Prostate gland (tissue), 2 donors: ENCODE measurements at regions of chr14 and their contacts with region 1.

Region 1: DNA sequence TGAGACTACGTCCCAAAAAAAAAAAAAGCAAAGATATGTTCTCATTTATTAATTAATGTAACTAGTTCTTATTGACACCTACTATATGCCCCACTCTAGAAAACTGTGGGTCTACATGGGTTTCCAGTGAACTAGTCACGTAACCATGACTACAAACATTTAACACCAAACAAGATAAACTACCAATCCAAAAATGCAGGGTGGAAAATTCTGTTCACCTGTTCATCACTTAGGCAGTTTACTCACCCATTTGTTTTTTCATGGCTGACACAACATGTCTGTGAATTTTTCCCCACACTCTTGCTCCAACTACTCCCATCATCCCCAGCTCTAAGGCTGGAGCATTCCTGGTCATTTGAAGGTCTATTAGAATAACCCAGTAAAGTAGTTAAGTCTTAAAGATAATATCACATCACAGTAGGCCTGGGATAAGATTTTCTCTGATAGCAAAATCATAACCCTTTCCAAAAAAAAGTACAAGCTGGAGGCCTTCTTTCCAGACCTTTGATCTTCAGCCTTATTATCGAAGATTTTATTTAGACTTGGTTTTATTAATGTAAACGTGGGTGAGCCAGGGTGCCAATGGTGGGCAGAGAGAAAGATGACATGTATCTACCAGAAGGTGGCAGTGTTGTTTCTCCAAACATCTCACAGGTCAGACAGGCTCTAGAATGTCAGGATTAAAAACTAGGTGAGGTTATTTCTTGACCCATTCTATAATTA is 61.6 kb upstream of the DAAM1 start:
- DNase-seq: peak; percentile 33
- H3K4me3 ChIP-seq: no peak overlapping the region
- H3K27ac ChIP-seq: no peak overlapping the region
- H3K4me1 ChIP-seq: no peaks in the 10 kb centered on the region
- H3K27me3 ChIP-seq: no peaks in the 10 kb centered on the region
- CTCF ChIP-seq: peak; percentile 37 to 87 (median 82)
- POLR2A ChIP-seq: no peak

Region 2: DNA sequence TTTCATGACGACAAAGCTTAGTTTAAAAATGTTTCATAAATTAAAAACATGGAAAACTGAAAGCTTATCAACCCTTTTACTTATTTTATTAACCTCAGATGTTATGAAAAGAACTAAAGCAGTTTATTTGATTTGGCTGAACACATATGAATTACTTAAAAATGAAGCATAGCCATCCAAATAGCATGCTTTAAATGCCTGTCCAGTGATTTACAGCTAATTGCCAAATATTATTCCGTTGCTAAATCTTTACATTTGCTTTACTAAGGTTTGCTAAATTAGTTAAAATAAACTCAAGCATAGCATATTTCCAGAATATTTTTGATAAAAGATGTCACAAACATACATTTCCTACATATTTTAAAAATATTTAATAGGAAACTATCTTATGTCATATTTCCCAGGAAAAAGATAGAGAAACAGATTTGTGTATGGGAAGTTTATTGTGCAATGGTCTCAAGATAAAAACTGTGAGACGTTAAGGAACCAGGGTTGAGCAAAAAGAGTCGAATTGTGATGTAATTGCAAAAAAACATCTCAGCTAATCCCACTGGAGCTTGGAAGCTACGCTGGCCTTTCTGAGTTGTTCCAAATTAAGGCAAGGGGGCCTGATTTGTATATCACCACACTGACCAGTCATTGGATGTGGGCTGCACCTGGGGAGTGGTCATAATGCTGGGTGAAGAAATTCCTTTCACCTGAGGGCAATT is 312.5 kb after region 1 on chr14:
- intact Hi-C with region 1: loop called (anchors 1 kb)
- DNase-seq: no peak
- H3K4me3 ChIP-seq: no peak overlapping the region
- H3K27ac ChIP-seq: no peak overlapping the region
- H3K4me1 ChIP-seq: no peaks in the 10 kb centered on the region
- H3K27me3 ChIP-seq: no peaks in the 10 kb centered on the region
- CTCF ChIP-seq: no peak
- POLR2A ChIP-seq: no peak

Region 3: DNA sequence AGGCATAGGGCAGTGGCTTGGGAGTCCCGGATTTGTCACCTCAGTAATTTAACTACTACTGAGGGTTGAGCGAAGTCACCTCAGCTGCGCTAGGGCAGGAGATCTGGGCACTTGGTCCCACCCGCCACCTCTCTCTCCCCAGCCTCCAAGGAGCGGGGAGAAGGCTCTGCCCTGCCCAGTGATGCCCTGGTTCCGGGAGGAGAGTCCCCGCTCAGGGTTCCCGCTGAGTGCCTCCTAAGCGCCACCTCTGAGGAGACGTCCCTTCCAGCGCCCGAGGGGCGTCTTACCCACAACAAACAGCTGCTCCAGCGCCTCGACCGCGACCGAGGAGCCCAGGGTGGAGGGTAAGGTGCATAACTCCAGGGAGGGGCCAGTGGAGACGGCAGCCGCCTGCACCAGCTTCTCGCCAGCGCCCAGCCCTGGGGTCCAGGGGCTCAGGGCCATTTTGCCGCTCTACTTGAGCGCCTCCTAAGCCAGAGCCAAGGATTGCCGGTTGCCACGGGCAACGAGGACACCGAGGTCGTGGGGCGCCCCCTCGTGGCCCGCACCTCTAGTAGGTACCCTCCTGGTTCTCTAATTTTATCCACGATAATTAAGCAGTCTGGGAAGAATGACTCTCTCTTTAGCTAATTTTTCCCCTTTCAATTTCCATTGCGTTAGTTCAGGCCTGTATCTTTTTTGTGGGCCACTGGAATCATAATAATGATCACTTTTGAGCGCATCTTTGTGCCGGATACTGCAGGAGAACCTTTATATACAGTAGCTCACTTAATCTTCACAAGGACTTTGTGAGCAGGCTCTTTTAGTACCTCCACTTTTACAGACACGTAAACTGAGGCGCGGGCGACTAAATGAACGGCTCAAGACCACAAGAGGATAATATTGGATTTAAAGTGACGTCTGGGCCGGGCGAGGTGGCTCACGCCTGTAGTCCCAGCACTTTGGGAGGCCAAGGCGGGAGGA is 449.7 kb after region 1 on chr14 and contains the start of gene CCDC175:
- intact Hi-C with region 1: loop called (anchors 10 kb)
- DNase-seq: peak; percentile 77
- H3K4me3 ChIP-seq: peak within 1 kb of the TSS; percentile 9 to 20
- H3K27ac ChIP-seq: no peak within 1 kb of the TSS
- H3K4me1 ChIP-seq: no peaks in the 10 kb centered on the region
- H3K27me3 ChIP-seq: no peaks in the 10 kb centered on the region
- CTCF ChIP-seq: peak; percentile 19 to 68 (median 58)
- POLR2A ChIP-seq: no peak
- total RNA-seq, gene CCDC175: not detected